SK-N-SH (cell line): ENCODE measurements at regions of chr14 and their contacts with region 1.

Region 1: DNA sequence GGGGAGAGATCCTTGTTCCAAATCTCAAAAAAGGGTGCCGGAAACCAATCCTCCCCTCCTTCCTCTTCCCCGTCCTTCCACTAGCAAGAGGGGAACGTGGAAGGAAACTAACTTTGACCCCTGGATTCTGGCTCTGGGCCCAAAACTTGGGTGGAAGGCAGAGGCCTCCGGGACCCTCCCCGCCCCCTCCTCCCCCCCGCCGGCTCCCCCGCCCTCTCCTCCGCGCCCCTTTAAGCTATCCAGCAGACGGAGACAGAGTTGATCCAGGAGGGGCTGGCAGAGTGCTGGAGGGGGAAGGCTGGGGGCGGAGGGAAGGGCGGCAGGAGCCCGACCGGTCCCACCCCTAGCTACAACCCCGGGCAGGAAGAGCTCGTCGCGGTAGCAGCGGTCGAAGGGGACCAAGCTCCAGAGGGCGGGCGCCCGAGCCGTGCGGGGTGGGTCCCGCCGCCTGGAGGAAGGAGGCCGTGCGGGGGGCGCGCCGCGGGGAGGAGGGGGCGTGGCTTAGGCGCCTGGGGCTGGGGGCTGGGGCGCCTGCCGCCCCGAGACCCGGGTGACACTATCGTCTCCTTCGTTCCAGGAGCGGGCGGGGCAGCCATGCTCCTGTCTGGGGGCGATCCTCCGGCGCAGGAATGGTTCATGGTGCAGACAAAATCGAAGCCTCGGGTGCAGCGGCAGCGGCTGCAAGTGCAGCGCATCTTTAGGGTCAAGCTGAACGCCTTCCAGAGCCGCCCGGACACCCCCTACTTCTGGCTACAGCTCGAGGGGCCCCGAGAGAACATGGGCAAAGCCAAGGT is at the start of gene NYNRIN:
- DNase-seq: peak; percentile 87
- H3K4me3 ChIP-seq: peak within 1 kb of the TSS; percentile 66 to 73
- H3K27ac ChIP-seq: peak within 1 kb of the TSS in 1 of 2 experiments; percentile 72; a peak in 1 of 4 replicates
- H3K4me1 ChIP-seq: peaks cover 0 to 32% of the 10 kb centered on the region in 2 experiments; a peak in 1 of 4 replicates
- H3K27me3 ChIP-seq: no peaks in the 10 kb centered on the region
- CTCF ChIP-seq: no peak
- EP300 ChIP-seq: no peak
- RAD21 ChIP-seq: no peak
- polyA plus RNA-seq, gene NYNRIN: 4.7 and 4.8 TPM in 2 replicates

Region 2: GRCh38 chr14:24114536-24115450 is 284.1 kb before region 1 on chr14 and contains the starts of genes DCAF11 and NRL:
- CTCF ChIA-PET with region 1: no interaction called
- POLR2A ChIA-PET with region 1: no interaction called
- DNase-seq: peak; percentile 95
- H3K4me3 ChIP-seq: peak within 1 kb of the TSS; percentile 71 to 88
- H3K27ac ChIP-seq: peak within 1 kb of the TSS; percentile 97 to 99
- H3K4me1 ChIP-seq: peaks cover 10 to 17% of the 10 kb centered on the region in 2 experiments
- H3K27me3 ChIP-seq: no peaks in the 10 kb centered on the region
- CTCF ChIP-seq: no peak
- EP300 ChIP-seq: peak in 1 of 2 experiments; percentile 25; a peak in 1 of 4 replicates
- RAD21 ChIP-seq: no peak
- polyA plus RNA-seq, gene DCAF11: 34.6 and 36.7 TPM in 2 replicates
- polyA plus RNA-seq, gene NRL: 0.76 and 0.88 TPM in 2 replicates

Region 3: DNA sequence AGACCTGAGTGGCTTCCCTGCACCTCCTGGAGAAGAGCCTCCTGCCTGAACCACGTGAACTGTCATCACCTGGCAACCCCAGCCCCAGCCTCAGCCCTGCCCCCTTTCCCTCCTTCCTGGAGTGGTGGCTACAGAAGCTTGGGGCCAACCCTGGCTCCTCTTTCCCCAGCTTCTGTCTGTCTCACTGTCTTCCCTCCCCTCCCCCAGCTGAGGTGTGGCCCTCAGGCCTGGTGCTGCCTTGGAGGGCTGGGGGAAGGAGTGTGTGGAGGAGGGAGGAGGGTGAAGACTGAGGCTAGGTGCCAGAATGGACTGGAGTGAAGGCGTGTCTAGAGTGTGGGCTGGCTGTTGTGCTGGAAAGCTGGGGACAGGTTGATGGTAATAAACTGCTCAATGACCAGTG is 21.2 kb before region 1 on chr14:
- CTCF ChIA-PET with region 1: no interaction called
- POLR2A ChIA-PET with region 1: no interaction called
- DNase-seq: no peak
- H3K4me3 ChIP-seq: no peak overlapping the region
- H3K27ac ChIP-seq: no peak overlapping the region
- H3K4me1 ChIP-seq: peaks cover 0 to 17% of the 10 kb centered on the region in 2 experiments; a peak in 1 of 4 replicates
- H3K27me3 ChIP-seq: no peaks in the 10 kb centered on the region
- CTCF ChIP-seq: no peak
- EP300 ChIP-seq: no peak
- RAD21 ChIP-seq: no peak

Region 4: GRCh38 chr14:24411443-24412389 is 12.9 kb after region 1 on chr14:
- CTCF ChIA-PET with region 1: interaction called, 15 read pairs
- POLR2A ChIA-PET with region 1: interaction called, 3 read pairs
- DNase-seq: peak; percentile 77
- H3K4me3 ChIP-seq: no peak overlapping the region
- H3K27ac ChIP-seq: no peak overlapping the region
- H3K4me1 ChIP-seq: no peaks in the 10 kb centered on the region; a peak in 1 of 4 replicates
- H3K27me3 ChIP-seq: no peaks in the 10 kb centered on the region
- CTCF ChIP-seq: peak; percentile 73
- EP300 ChIP-seq: no peak
- RAD21 ChIP-seq: peak; percentile 72